ENCODE measurements at regions of chr22 and their contacts with region 1.

Region 1: GRCh38 chr22:44697423-44698141 is 4.4 kb upstream of the PRR5 start:
- H3K4me3 Mint-ChIP-seq: no peak overlapping the region
- H3K27ac Mint-ChIP-seq: peak overlapping the region; percentile 3
- H3K4me1 Mint-ChIP-seq: peaks cover 4% of the 10 kb centered on the region
- H3K27me3 Mint-ChIP-seq: peaks cover 41% of the 10 kb centered on the region

Region 2: DNA sequence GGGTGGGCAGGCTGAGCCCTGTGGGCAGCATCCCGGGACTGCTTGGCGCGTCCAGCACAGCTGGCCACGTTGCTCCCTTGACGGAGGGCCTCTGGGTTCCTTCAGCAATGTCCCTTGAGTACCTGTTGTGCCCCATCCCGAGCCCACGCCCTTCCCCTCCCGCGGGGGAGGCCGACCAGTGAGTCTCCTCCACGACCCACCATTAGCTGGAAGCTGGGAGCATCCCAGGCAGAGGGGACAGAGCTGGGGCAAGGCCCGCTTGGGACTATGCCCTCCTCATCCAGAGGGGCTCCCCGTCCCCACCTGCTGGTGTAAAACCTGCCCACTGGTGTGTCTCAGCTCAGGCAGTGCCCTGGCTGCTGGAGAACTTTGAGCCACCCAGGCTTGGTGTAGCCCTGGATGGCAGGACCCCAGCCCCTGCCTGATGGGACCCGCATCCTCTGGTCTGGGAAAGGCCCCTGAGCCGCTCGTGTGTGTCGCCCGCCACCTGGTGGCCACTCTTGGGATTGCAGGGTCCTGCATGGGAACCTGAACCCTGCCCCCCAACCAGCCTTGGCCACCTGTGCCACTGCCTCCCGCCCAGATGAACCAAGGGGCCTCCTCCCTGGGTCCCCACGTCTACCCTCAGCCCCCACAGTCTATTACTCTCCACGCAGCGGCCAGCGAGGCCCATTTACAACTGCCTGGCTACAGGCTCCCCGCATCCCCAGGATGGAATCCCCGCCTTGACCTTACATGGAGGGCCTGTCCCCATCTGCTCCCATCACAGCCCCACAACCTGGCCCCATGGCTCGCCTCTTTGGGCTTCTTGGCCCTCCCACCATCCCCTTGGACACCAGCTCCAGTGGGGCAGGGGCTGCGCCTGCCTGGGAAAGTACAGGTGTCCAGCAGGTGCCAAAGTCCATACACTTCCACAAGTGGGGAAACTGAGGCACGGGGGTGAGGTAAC is 38.2 kb after region 1 on chr22:
- intact Hi-C with region 1: loop called (anchors 1 kb)
- H3K4me3 Mint-ChIP-seq: no peak overlapping the region
- H3K27ac Mint-ChIP-seq: no peak overlapping the region
- H3K4me1 Mint-ChIP-seq: no peaks in the 10 kb centered on the region
- H3K27me3 Mint-ChIP-seq: peaks cover under 1% of the 10 kb centered on the region